ENCODE measurements at regions of chr3 and their contacts with region 1.

Region 1: GRCh38 chr3:50227390-50228183 is 8.4 kb upstream of the GNAI2 start:
- DNase-seq: peak; percentile 78 to 94 (median 89)
- H3K4me3 ChIP-seq: peak overlapping the region; percentile 57 to 95 (median 81)
- H3K27ac ChIP-seq: peak overlapping the region; percentile 48 to 94 (median 87)
- H3K27me3 ChIP-seq: no peaks in the 10 kb centered on the region
- CTCF ChIP-seq: peak; percentile 66 to 99 (median 93)

Region 2: DNA sequence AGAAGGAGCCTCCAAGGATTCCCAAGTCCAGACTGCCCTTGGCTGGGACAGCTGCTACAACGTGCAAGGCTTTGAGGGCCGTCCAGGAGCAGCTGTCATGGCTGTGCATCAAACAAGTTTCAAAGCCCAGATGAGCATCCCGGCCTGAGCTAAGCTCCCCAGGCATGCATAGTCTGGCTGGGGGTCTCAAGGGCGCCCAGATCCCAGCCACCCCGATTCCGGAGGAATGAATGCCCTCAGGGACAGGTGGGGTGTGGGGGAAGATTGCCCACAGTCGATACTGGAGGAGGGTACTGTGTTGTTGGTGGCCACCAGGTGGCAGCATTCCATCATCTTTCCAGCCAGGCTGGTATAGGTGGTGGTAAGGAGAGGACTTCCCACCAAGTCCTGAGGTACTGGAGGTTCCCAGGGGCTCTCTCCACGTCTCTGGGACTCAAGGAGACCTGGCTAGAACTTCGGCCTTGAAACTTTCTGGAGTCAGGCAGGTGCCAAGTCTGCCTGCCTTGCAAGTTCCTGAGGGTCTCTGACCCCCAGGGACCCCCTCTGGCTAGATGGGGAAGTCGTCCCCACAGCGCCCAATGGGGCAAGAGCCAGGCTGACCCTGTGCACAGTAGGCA is 106.1 kb before region 1 on chr3:
- intact Hi-C with region 1: loop called in 1 of 2 experiments (anchors 5 kb)
- DNase-seq: peak; percentile 57 to 83 (median 79)
- H3K4me3 ChIP-seq: no peak overlapping the region
- H3K27ac ChIP-seq: peak overlapping the region in 30 of 59 donors; percentile 3 to 75 (median 50)
- H3K27me3 ChIP-seq: no peaks in the 10 kb centered on the region
- CTCF ChIP-seq: peak; percentile 72 to 95 (median 88)

Region 3: GRCh38 chr3:50245831-50246516 is 18.4 kb after region 1 on chr3:
- intact Hi-C with region 1: loop called (anchors 1 to 2 kb)
- DNase-seq: peak; percentile 82 to 91 (median 88)
- H3K4me3 ChIP-seq: peak overlapping the region; percentile 33 to 75 (median 58)
- H3K27ac ChIP-seq: peak overlapping the region; percentile 59 to 100 (median 86)
- H3K27me3 ChIP-seq: no peaks in the 10 kb centered on the region
- CTCF ChIP-seq: peak; percentile 85 to 100 (median 97)

Region 4: GRCh38 chr3:50272911-50273693 is 45.5 kb after region 1 on chr3:
- intact Hi-C with region 1: loop called (anchors 1 to 2 kb)
- DNase-seq: peak; percentile 81 to 92 (median 89)
- H3K4me3 ChIP-seq: peak overlapping the region; percentile 0 to 69 (median 48)
- H3K27ac ChIP-seq: peak overlapping the region; percentile 65 to 100 (median 100)
- H3K27me3 ChIP-seq: peaks cover 0 to 35% (median 14%) of the 10 kb centered on the region in 45 donors
- CTCF ChIP-seq: peak; percentile 97 to 100 (median 99)

Region 5: DNA sequence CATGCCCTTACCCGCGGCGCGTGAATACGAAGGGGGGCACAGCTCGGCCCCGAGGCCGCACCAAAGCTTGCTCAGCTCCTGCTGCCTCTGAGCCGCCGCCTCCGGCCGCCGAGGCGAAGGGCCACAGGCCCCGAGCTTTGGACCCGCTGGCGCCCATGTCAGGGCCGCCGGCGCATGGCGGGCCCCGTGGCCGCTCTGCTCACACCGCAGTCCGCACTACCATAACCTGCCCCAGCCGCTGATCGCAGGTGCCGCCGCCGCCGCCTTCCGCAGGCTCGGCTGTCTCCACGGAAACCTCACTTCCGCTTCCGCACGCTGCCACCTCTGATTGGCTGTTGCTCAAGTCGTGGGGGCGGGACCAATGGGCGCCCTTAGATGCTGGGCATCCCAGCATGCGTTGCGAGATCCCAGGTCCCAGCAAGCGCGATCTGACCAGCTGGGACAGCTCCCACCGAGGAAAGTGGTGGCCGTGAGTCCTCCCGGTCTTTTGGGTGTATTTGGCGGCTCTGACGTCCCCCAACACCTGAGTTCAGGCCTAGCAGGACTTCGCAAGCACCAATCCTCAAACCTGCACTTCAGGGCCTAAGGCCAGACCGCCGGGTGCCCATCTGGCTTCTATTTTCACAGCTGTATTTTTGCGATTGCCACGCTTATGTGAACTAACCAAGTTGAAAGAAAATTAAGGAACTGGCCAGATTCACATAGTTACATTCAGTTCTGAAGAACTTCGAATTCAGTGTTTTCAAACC is 100.5 kb after region 1 on chr3 and contains the start of gene TUSC2:
- intact Hi-C with region 1: loop called in 1 of 2 experiments (anchors 2 kb)
- DNase-seq: peak; percentile 97 to 99 (median 98)
- H3K4me3 ChIP-seq: peak within 1 kb of the TSS; percentile 75 to 100 (median 97)
- H3K27ac ChIP-seq: peak within 1 kb of the TSS in 56 of 59 donors; percentile 35 to 94 (median 82)
- H3K27me3 ChIP-seq: no peaks in the 10 kb centered on the region
- CTCF ChIP-seq: peak in 29 of 56 donors; percentile 10 to 59 (median 30)
- total RNA-seq, gene TUSC2: 29.2 to 71.0 (median 52.4) TPM

Region 6: GRCh38 chr3:51282931-51283330 is 1055.3 kb after region 1 on chr3:
- intact Hi-C with region 1: no loop called
- DNase-seq: no peak
- H3K4me3 ChIP-seq: no peak overlapping the region
- H3K27ac ChIP-seq: no peak overlapping the region
- H3K27me3 ChIP-seq: no peaks in the 10 kb centered on the region
- CTCF ChIP-seq: no peak